Dendritic cell treated with granulocyte-macrophage colony-stimulating factor and Interleukin-4, amounts not matched to agents 40 ng/mL and 50 ng/mL, for 4 days (primary cell): ENCODE measurements at regions of chr13 and their contacts with region 1.

Region 1: DNA sequence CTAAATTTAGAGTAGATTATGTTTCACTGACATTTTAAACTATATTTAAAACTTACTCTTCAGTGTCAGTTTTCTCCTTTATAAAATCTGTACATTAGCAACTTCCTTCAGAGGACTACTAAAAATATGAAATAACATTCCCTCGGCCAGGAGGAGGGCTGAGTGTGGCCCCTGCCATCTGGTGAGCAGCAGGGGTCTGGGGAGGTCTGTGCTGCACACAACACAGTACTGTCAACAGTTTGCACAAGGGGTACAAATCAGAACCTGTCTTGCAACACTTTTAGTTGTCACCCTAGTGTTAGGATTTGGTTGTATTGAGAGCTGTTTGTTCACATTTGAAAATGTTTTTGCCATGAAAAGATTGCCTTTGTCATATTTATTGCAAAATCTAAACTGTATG is 48.9 kb downstream of the TPP2 start:
- H3K4me3 Mint-ChIP-seq: no peak overlapping the region
- H3K27ac Mint-ChIP-seq: no peak overlapping the region
- H3K4me1 Mint-ChIP-seq: no peaks in the 10 kb centered on the region
- H3K27me3 Mint-ChIP-seq: no peaks in the 10 kb centered on the region

Region 2: DNA sequence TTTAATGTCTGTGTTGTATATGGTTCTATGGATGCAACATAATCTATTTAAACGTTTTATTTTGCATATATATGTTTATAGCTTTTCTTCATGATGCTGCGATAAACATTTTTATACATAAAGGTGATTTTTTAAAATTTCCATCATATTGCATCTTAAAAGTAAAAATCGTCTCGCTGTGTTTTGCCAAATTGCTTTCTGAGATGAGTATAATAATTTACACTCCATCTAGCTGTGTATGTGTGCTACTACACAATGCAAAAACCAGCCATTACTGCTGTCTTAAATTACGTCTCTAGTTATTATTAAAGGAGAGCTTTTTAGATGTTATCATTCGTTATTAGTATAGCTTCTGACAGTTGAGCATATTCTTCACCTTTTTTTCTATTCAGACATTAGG is 11.9 kb after region 1 on chr13:
- intact Hi-C with region 1: loop called (anchors 2 kb)
- H3K4me3 Mint-ChIP-seq: no peak overlapping the region
- H3K27ac Mint-ChIP-seq: no peak overlapping the region
- H3K4me1 Mint-ChIP-seq: no peaks in the 10 kb centered on the region
- H3K27me3 Mint-ChIP-seq: no peaks in the 10 kb centered on the region

Region 3: DNA sequence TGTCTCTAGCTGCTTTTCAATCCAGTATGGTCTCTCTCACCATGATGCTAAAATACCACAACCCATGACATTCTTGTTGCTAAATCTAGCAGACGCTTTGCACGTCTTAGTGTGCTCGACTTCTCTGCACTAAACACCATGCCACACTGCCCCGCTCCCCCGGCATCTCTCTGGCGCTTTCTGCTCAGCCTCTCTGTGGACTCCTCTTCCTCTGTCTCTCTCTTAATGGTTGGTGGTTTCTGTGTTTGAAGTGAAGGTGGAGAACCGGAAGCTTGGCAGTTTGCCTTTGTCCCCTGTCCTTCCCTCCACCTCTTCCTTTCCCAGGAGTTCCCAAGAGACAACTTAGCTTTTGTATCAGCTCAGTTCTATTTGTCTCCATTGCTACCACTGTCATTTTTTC is 209.0 kb after region 1 on chr13:
- intact Hi-C with region 1: loop called (anchors 5 kb)
- H3K4me3 Mint-ChIP-seq: no peak overlapping the region
- H3K27ac Mint-ChIP-seq: no peak overlapping the region
- H3K4me1 Mint-ChIP-seq: peaks cover 16% of the 10 kb centered on the region
- H3K27me3 Mint-ChIP-seq: no peaks in the 10 kb centered on the region